Endothelial cell of umbilical vein (primary cell): ENCODE measurements at regions of chr7 and their contacts with region 1.

Region 1: GRCh38 chr7:129218514-129219062 is 6.2 kb upstream of the AHCYL2 start:
- DNase-seq: peak; percentile 80
- H3K4me3 ChIP-seq: no peak overlapping the region
- H3K27ac ChIP-seq: no peak overlapping the region
- H3K4me1 ChIP-seq: peaks cover 7% of the 10 kb centered on the region
- H3K27me3 ChIP-seq: peaks cover 0 to 2% of the 10 kb centered on the region in 2 experiments
- CTCF ChIP-seq: peak; percentile 79 to 84
- POLR2A ChIP-seq: no peak

Region 2: GRCh38 chr7:128982105-128982504 is 236.5 kb before region 1 on chr7:
- CTCF ChIA-PET with region 1: no interaction called
- POLR2A ChIA-PET with region 1: no interaction called
- dilution Hi-C with region 1: no loop called
- intact Hi-C with region 1: no loop called
- DNase-seq: no peak
- H3K4me3 ChIP-seq: no peak overlapping the region
- H3K27ac ChIP-seq: no peak overlapping the region
- H3K4me1 ChIP-seq: no peaks in the 10 kb centered on the region
- H3K27me3 ChIP-seq: no peaks in the 10 kb centered on the region
- CTCF ChIP-seq: no peak
- POLR2A ChIP-seq: no peak

Region 3: DNA sequence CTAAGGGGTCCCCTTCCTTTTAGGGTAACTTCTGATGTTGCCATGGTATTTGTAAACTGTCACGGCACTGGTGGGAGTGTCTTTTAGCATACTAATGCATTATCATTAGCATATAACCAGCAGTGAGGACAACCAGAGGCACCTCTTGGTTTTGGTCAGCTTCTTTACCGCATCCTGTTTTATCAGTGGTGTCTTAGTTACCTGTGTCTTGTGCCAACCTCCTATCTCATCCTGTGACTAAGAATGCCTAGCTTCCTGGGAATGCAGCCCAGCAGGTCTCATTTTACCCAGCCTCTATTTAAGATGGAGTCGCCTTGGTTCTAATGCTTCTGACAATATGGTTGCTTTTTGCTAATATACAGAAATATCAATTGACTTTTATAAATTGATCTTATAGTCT is 61.2 kb after region 1 on chr7:
- CTCF ChIA-PET with region 1: interaction called, 23 read pairs
- POLR2A ChIA-PET with region 1: no interaction called
- dilution Hi-C with region 1: no loop called
- intact Hi-C with region 1: no loop called
- DNase-seq: no peak
- H3K4me3 ChIP-seq: no peak overlapping the region
- H3K27ac ChIP-seq: no peak overlapping the region
- H3K4me1 ChIP-seq: peaks cover 21% of the 10 kb centered on the region
- H3K27me3 ChIP-seq: no peaks in the 10 kb centered on the region
- CTCF ChIP-seq: no peak
- POLR2A ChIP-seq: no peak

Region 4: DNA sequence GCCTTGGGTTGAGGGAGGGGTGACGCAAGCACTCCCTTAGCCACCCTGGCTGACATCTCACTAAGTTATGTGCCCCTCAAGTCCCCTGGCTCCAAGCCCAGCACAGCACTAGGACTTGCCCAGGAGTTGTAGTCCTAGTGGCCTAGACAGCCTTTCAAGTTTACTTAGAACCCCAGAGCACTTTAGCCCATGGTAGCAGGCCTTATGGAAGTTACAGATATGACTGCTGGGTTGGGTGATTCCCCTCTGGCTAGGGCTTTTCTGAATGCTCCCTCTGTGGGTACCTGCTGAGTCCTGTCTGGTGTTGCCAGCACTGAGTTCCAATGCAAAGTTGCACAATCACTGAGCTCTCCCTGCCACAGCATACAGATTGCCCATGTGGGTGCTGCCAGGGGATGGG is 89.5 kb after region 1 on chr7:
- CTCF ChIA-PET with region 1: interaction called, 14 read pairs
- POLR2A ChIA-PET with region 1: no interaction called
- dilution Hi-C with region 1: no loop called
- intact Hi-C with region 1: no loop called
- DNase-seq: no peak
- H3K4me3 ChIP-seq: no peak overlapping the region
- H3K27ac ChIP-seq: no peak overlapping the region
- H3K4me1 ChIP-seq: no peaks in the 10 kb centered on the region
- H3K27me3 ChIP-seq: no peaks in the 10 kb centered on the region
- CTCF ChIP-seq: no peak
- POLR2A ChIP-seq: no peak

Region 5: DNA sequence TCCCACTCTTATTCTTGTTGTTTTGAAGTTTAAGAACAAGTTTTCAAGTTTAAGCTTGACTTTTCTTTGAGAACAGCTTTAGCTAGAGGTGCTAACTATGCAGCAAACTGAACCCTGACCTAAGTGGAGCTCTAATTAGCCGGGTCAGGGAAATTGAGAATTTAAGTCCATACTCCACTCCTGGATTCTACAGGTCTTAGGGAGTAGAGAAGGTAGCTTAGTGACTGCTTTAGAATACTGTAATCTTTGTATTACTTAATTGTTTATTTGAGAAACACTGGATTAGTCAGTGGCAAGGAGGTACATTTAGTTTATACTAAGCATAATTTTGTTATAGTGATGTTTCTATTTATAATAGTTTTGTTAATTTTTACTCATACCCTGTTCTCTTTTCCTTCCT is 141.1 kb after region 1 on chr7:
- CTCF ChIA-PET with region 1: interaction called, 12 read pairs
- POLR2A ChIA-PET with region 1: no interaction called
- dilution Hi-C with region 1: no loop called
- intact Hi-C with region 1: no loop called
- DNase-seq: no peak
- H3K4me3 ChIP-seq: no peak overlapping the region
- H3K27ac ChIP-seq: no peak overlapping the region
- H3K4me1 ChIP-seq: no peaks in the 10 kb centered on the region
- H3K27me3 ChIP-seq: no peaks in the 10 kb centered on the region
- CTCF ChIP-seq: no peak
- POLR2A ChIP-seq: no peak

Region 6: GRCh38 chr7:129468087-129468486 is 249.5 kb after region 1 on chr7:
- CTCF ChIA-PET with region 1: interaction called, 67 read pairs
- POLR2A ChIA-PET with region 1: no interaction called
- dilution Hi-C with region 1: no loop called
- intact Hi-C with region 1: loop called (anchors 1 kb)
- DNase-seq: no peak
- H3K4me3 ChIP-seq: no peak overlapping the region
- H3K27ac ChIP-seq: no peak overlapping the region
- H3K4me1 ChIP-seq: no peaks in the 10 kb centered on the region
- H3K27me3 ChIP-seq: no peaks in the 10 kb centered on the region
- CTCF ChIP-seq: no peak
- POLR2A ChIP-seq: no peak